ENCODE measurements at regions of chr3 and their contacts with region 1.

Region 1: GRCh38 chr3:186821429-186822367 is 15.4 kb upstream of the RFC4 start:
- DNase-seq: no peak
- H3K4me3 ChIP-seq: no peak overlapping the region
- H3K27ac ChIP-seq: no peak overlapping the region
- H3K4me1 ChIP-seq: peaks cover 9% of the 10 kb centered on the region
- H3K27me3 ChIP-seq: no peaks in the 10 kb centered on the region
- CTCF ChIP-seq: peak; percentile 92

Region 2: GRCh38 chr3:186259612-186260383 is 561.9 kb before region 1 on chr3:
- CTCF ChIA-PET with region 1: no interaction called
- POLR2A ChIA-PET with region 1: no interaction called
- intact Hi-C with region 1: loop called (anchors 1 kb)
- DNase-seq: peak; percentile 73 to 81
- H3K4me3 ChIP-seq: peak overlapping the region; percentile 23; the same call in 1 of the 2 replicates
- H3K27ac ChIP-seq: no peak overlapping the region
- H3K4me1 ChIP-seq: peaks cover 6% of the 10 kb centered on the region
- H3K27me3 ChIP-seq: peaks cover 4% of the 10 kb centered on the region; the same call in 1 of the 2 replicates
- CTCF ChIP-seq: peak; percentile 93

Region 3: GRCh38 chr3:186452517-186452916 is 369.2 kb before region 1 on chr3:
- CTCF ChIA-PET with region 1: no interaction called
- POLR2A ChIA-PET with region 1: no interaction called
- intact Hi-C with region 1: no loop called
- DNase-seq: peak; percentile 48 to 73
- H3K4me3 ChIP-seq: no peak overlapping the region
- H3K27ac ChIP-seq: no peak overlapping the region
- H3K4me1 ChIP-seq: peaks cover 3% of the 10 kb centered on the region; the same call in 1 of the 2 replicates
- H3K27me3 ChIP-seq: peaks cover 87% of the 10 kb centered on the region
- CTCF ChIP-seq: no peak

Measured in PC-9 (cell line).